ENCODE measurements at regions of chr1 and their contacts with region 1.

Region 1: GRCh38 chr1:232751393-232752140 is 53.6 kb upstream of the MAP10 start:
- DNase-seq: no peak
- H3K4me3 ChIP-seq: no peak overlapping the region
- H3K27ac ChIP-seq: peak overlapping the region; percentile 22 to 30
- H3K4me1 ChIP-seq: no peaks in the 10 kb centered on the region
- H3K27me3 ChIP-seq: no peaks in the 10 kb centered on the region
- CTCF ChIP-seq: no peak
- POLR2A ChIP-seq: no peak

Region 2: GRCh38 chr1:232767305-232768074 is 15.9 kb after region 1 on chr1:
- intact Hi-C with region 1: no loop called
- DNase-seq: peak in 1 of 2 donors; percentile 74
- H3K4me3 ChIP-seq: no peak overlapping the region
- H3K27ac ChIP-seq: peak overlapping the region; percentile 78 to 81
- H3K4me1 ChIP-seq: no peaks in the 10 kb centered on the region
- H3K27me3 ChIP-seq: no peaks in the 10 kb centered on the region
- CTCF ChIP-seq: no peak
- POLR2A ChIP-seq: no peak

Region 3: GRCh38 chr1:233904633-233905415 is 1153.3 kb after region 1 on chr1 and contains the start of gene SLC35F3:
- intact Hi-C with region 1: loop called (anchors 5 kb)
- DNase-seq: no peak
- H3K4me3 ChIP-seq: peak within 1 kb of the TSS in 2 of 3 donors; percentile 49 to 65
- H3K27ac ChIP-seq: no peak within 1 kb of the TSS
- H3K4me1 ChIP-seq: no peaks in the 10 kb centered on the region
- H3K27me3 ChIP-seq: peaks cover 5 to 14% of the 10 kb centered on the region in 2 donors
- CTCF ChIP-seq: no peak
- POLR2A ChIP-seq: no peak
- total RNA-seq, gene SLC35F3: 8.8 to 13.0 TPM in 2 of 3 donors, not detected in the other

Measured in breast epithelium (tissue), 4 donors.